ENCODE measurements at regions of chr12 and their contacts with region 1.

Region 1: GRCh38 chr12:68497702-68498101 is 113.0 kb upstream of the RAP1B start:
- DNase-seq: no peak
- ATAC-seq: peak; percentile 55
- H3K4me3 Mint-ChIP-seq: no peak overlapping the region
- H3K27ac Mint-ChIP-seq: no peak overlapping the region
- H3K4me1 Mint-ChIP-seq: peaks cover 16% of the 10 kb centered on the region
- H3K27me3 Mint-ChIP-seq: no peaks in the 10 kb centered on the region

Region 2: DNA sequence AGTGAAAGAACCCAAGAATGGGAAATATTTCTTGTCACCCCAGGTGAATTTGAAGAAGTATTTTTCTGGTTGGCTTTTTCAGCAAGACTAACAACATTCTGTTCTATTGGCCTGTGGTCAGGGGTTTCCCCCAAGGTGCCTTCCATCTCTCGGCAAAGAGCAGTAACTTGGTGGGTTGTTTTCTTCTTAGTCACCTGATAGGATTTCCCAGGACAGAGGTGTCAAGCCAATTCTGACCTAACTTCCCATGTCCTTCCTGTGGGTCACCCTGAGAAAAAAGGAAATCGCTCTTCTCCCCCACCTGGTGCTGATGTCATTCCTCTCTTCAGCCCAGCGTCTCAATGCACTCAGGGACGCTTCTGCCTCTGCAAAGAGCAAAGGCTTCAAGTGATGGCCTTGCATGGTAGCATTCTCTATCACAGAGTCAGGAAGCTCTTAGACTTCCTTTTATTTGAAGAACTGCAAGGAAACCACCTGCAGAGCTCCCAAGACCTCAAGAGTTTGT is 322.1 kb before region 1 on chr12:
- CTCF ChIA-PET with region 1: no interaction called
- POLR2A ChIA-PET with region 1: no interaction called
- DNase-seq: peak; percentile 74
- ATAC-seq: peak; percentile 81
- H3K4me3 Mint-ChIP-seq: peak overlapping the region; percentile 57
- H3K27ac Mint-ChIP-seq: peak overlapping the region; percentile 81
- H3K4me1 Mint-ChIP-seq: peaks cover 61% of the 10 kb centered on the region
- H3K27me3 Mint-ChIP-seq: no peaks in the 10 kb centered on the region

Region 3: DNA sequence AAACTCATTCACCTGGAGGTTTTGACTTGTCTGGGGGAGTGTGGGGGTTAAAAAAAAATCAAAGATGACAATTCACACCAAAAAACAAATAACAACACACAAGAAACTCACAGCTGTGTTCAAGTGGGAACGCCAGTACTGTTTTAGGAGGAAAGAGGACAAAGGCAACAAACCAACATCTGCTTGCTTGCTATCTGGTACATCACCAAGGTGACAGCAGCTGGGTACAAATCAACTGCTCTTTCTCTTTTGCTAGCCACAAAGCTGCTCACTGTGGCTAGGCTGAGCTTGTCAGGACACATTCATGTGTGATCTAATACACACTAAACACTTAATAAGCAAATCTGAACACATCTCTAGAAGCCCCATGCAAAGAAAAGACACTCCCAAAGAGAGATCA is 15.0 kb before region 1 on chr12:
- CTCF ChIA-PET with region 1: interaction called, 3 read pairs
- POLR2A ChIA-PET with region 1: interaction called, 10 read pairs
- DNase-seq: peak; percentile 58
- ATAC-seq: peak; percentile 89
- H3K4me3 Mint-ChIP-seq: peak overlapping the region; percentile 0
- H3K27ac Mint-ChIP-seq: peak overlapping the region; percentile 65
- H3K4me1 Mint-ChIP-seq: peaks cover 44% of the 10 kb centered on the region
- H3K27me3 Mint-ChIP-seq: no peaks in the 10 kb centered on the region

Region 4: DNA sequence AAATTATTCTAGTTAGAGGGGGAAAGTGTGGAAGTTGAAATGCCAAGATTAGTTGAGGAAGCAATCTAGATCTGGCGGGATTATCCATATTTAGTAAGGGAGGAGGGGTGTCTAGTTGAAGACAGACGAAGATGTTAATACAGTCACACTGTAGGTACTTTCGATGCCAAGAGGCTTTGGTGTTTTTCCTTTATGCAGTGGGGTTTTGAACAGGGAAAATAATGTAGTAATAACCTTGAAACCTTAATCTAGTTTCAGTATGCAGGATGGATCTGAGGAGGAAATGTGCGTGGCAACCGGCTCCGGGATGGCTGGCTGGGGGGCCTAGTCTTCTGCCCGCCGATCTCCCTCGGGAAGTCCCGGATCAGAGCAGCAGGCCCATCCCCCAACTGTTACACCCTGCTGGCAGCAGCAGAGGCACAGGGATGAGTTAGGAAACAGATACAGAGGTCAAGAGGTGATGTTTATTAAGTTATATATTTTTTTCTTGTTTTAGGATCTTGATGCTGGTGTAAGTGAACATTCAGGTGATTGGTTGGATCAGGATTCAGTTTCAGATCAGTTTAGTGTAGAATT is 337.7 kb after region 1 on chr12:
- CTCF ChIA-PET with region 1: no interaction called
- POLR2A ChIA-PET with region 1: no interaction called
- DNase-seq: no peak
- ATAC-seq: no peak
- H3K4me3 Mint-ChIP-seq: no peak overlapping the region
- H3K27ac Mint-ChIP-seq: no peak overlapping the region
- H3K4me1 Mint-ChIP-seq: peaks cover 8% of the 10 kb centered on the region
- H3K27me3 Mint-ChIP-seq: no peaks in the 10 kb centered on the region